Right ventricle myocardium inferior (tissue), 1 donor: ENCODE measurements at regions of chr6 and their contacts with region 1.

Region 1: GRCh38 chr6:2448820-2449571 is 203.6 kb upstream of the GMDS start:
- DNase-seq: no peak
- ATAC-seq: no peak

Region 2: GRCh38 chr6:2209226-2209809 is 239.7 kb before region 1 on chr6:
- intact Hi-C with region 1: loop called (anchors 5 kb)
- DNase-seq: no peak
- ATAC-seq: no peak

Region 3: DNA sequence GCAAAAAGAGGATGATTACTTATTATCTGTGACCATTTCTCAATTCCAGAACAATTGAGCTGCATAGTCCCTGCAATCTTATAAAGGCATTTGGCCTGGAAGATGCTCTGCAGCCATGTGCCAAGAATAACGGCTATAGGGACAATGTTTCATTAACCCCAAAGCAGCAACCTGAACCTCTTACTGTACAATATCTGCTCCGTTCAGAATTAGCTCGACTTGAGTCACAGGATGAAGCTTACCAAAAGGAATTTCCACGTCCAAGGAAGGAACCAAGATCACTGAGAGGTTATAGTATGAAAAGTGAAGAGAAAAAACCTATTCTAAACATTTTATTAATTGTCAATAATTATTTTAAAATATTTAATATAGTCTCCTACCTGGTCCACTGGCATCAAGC is 36.3 kb before region 1 on chr6:
- intact Hi-C with region 1: no loop called
- DNase-seq: no peak
- ATAC-seq: no peak